ENCODE measurements at regions of chr11 and their contacts with region 1.

Region 1: GRCh38 chr11:355581-356458 is 13.5 kb upstream of the B4GALNT4 start:
- DNase-seq: peak; percentile 85
- ATAC-seq: peak; percentile 56
- H3K4me3 ChIP-seq: peak overlapping the region in 4 of 5 experiments; percentile 41 to 53 (median 43)
- H3K4me3 Mint-ChIP-seq: peak overlapping the region; percentile 88
- H3K27ac ChIP-seq: peak overlapping the region; percentile 81 to 85
- H3K27ac Mint-ChIP-seq: peak overlapping the region; percentile 90
- H3K4me1 ChIP-seq: peaks cover 13 to 20% of the 10 kb centered on the region in 2 donors
- H3K4me1 Mint-ChIP-seq: peaks cover 18% of the 10 kb centered on the region
- H3K27me3 ChIP-seq: no peaks in the 10 kb centered on the region
- H3K27me3 Mint-ChIP-seq: no peaks in the 10 kb centered on the region
- CTCF ChIP-seq: no peak

Region 2: GRCh38 chr11:207208-207862 is 148.5 kb before region 1 on chr11 and contains the starts of genes BET1L and RIC8A:
- CTCF ChIA-PET with region 1: interaction called, 5 read pairs
- POLR2A ChIA-PET with region 1: interaction called, 12 read pairs
- intact Hi-C with region 1: loop called (anchors 1 kb)
- DNase-seq: peak; percentile 99
- ATAC-seq: peak; percentile 79
- H3K4me3 ChIP-seq: peak within 1 kb of the TSS; percentile 87 to 98 (median 91)
- H3K4me3 Mint-ChIP-seq: peak within 1 kb of the TSS; percentile 98
- H3K27ac ChIP-seq: peak within 1 kb of the TSS; percentile 96 to 98
- H3K27ac Mint-ChIP-seq: peak within 1 kb of the TSS; percentile 100
- H3K4me1 ChIP-seq: peaks cover 26 to 43% of the 10 kb centered on the region in 2 donors
- H3K4me1 Mint-ChIP-seq: peaks cover 53% of the 10 kb centered on the region
- H3K27me3 ChIP-seq: no peaks in the 10 kb centered on the region
- H3K27me3 Mint-ChIP-seq: no peaks in the 10 kb centered on the region
- CTCF ChIP-seq: no peak
- total RNA-seq, gene BET1L: 69.1 and 72.2 TPM in 2 replicates
- total RNA-seq, gene RIC8A: 102 and 110 TPM in 2 replicates

Region 3: DNA sequence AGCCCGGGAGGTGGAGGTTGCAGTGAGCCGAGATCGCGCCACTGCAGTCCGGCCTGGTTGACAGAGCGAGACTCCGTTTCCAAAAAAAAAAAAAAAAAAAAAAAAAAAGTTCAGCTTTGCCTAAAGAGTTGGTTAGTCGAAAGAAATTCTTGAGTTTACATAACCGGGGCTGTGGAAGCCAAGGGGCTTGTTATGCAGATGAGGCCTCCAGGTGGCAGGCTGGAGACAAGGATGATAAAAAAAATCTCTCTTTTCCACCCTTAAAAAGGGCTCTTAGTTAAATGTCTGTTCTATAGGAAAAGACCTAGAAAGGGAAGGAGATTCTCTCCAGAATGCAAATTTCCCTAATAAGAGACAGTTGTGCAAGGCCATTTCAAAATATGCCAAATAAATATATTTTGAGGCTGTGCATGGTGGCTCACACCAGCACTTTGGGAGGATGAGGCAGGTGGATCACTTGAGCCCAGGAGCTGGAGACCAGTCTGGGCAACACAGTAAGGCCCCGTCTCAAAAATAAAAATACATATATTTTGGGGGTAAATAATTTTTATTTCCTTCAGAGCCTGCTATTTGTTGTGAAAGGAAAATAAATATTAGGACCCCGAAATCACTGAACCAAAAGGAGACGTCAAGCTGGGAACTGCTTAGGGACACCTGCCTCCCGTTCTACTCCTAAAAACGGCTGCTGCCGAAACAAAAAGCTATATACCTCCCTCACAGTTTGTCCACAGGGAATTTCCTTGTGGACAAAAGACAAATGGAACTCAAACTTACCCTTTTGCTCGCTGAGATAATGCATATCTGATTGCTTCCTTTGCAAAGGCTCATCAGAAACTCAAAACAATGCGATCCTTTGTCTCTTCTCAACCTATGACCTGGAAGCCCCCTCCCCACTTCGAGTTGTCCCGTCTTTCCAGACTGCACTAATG is 50.6 kb before region 1 on chr11:
- CTCF ChIA-PET with region 1: interaction called, 28 read pairs
- POLR2A ChIA-PET with region 1: interaction called, 5 read pairs
- intact Hi-C with region 1: loop called (anchors 2 kb)
- DNase-seq: peak; percentile 71
- ATAC-seq: peak; percentile 37
- H3K4me3 ChIP-seq: no peak overlapping the region
- H3K4me3 Mint-ChIP-seq: no peak overlapping the region
- H3K27ac ChIP-seq: no peak overlapping the region
- H3K27ac Mint-ChIP-seq: peak overlapping the region; percentile 73
- H3K4me1 ChIP-seq: peaks cover 28 to 56% of the 10 kb centered on the region in 2 donors
- H3K4me1 Mint-ChIP-seq: peaks cover 52% of the 10 kb centered on the region
- H3K27me3 ChIP-seq: peaks cover 0 to 2% (median 0%) of the 10 kb centered on the region in 4 experiments
- H3K27me3 Mint-ChIP-seq: no peaks in the 10 kb centered on the region
- CTCF ChIP-seq: peak; percentile 67

Region 4: DNA sequence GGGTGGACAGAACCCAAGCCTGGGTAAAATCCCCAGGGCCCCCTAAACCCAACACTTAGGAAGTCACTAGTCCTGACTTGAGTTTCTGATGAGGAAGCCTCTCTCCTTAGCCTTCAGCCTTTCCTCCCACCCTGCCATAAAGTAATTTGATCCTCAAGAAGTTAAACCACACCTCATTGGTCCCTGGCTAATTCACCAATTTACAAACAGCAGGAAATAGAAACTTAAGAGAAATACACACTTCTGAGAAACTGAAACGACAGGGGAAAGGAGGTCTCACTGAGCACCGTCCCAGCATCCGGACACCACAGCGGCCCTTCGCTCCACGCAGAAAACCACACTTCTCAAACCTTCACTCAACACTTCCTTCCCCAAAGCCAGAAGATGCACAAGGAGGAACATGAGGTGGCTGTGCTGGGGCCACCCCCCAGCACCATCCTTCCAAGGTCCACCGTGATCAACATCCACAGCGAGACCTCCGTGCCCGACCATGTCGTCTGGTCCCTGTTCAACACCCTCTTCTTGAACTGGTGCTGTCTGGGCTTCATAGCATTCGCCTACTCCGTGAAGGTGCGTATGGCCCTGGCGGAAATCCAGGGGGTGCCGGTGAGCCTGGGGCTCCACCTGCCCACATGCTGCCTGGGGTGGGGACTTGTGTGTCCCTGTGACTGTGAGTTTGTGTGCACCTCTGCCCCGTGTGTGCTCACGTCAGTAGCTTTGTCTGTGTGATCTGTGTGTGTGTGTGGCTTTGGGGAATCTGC is 41.9 kb before region 1 on chr11 and contains the start of gene IFITM1:
- CTCF ChIA-PET with region 1: interaction called, 11 read pairs
- POLR2A ChIA-PET with region 1: interaction called, 5 read pairs
- intact Hi-C with region 1: no loop called
- DNase-seq: peak; percentile 78
- ATAC-seq: peak; percentile 37
- H3K4me3 ChIP-seq: peak within 1 kb of the TSS; percentile 44 to 79 (median 60)
- H3K4me3 Mint-ChIP-seq: peak within 1 kb of the TSS; percentile 93
- H3K27ac ChIP-seq: peak within 1 kb of the TSS; percentile 84 to 89
- H3K27ac Mint-ChIP-seq: peak within 1 kb of the TSS; percentile 94
- H3K4me1 ChIP-seq: peaks cover 42 to 65% of the 10 kb centered on the region in 2 donors
- H3K4me1 Mint-ChIP-seq: peaks cover 55% of the 10 kb centered on the region
- H3K27me3 ChIP-seq: no peaks in the 10 kb centered on the region
- H3K27me3 Mint-ChIP-seq: no peaks in the 10 kb centered on the region
- CTCF ChIP-seq: no peak
- total RNA-seq, gene IFITM1: 19.5 and 19.7 TPM in 2 replicates

Region 5: GRCh38 chr11:326842-327580 is 28.8 kb before region 1 on chr11:
- CTCF ChIA-PET with region 1: interaction called, 10 read pairs
- POLR2A ChIA-PET with region 1: interaction called, 8 read pairs
- intact Hi-C with region 1: no loop called
- DNase-seq: peak; percentile 87
- ATAC-seq: peak; percentile 74
- H3K4me3 ChIP-seq: peak overlapping the region in 4 of 5 experiments; percentile 21 to 34 (median 26)
- H3K4me3 Mint-ChIP-seq: peak overlapping the region; percentile 66
- H3K27ac ChIP-seq: peak overlapping the region; percentile 95 to 96
- H3K27ac Mint-ChIP-seq: peak overlapping the region; percentile 95
- H3K4me1 ChIP-seq: peaks cover 34 to 55% of the 10 kb centered on the region in 2 donors
- H3K4me1 Mint-ChIP-seq: peaks cover 54% of the 10 kb centered on the region
- H3K27me3 ChIP-seq: no peaks in the 10 kb centered on the region
- H3K27me3 Mint-ChIP-seq: no peaks in the 10 kb centered on the region
- CTCF ChIP-seq: no peak

Region 6: GRCh38 chr11:842370-843002 is 486.7 kb after region 1 on chr11 and contains the starts of genes POLR2L and TSPAN4:
- CTCF ChIA-PET with region 1: no interaction called
- POLR2A ChIA-PET with region 1: no interaction called
- intact Hi-C with region 1: no loop called
- DNase-seq: peak; percentile 97
- ATAC-seq: peak; percentile 84
- H3K4me3 ChIP-seq: peak within 1 kb of the TSS; percentile 69 to 96 (median 76)
- H3K4me3 Mint-ChIP-seq: peak within 1 kb of the TSS; percentile 88
- H3K27ac ChIP-seq: peak within 1 kb of the TSS in 1 of 2 donors; percentile 93
- H3K27ac Mint-ChIP-seq: peak within 1 kb of the TSS; percentile 91
- H3K4me1 ChIP-seq: peaks cover 26 to 37% of the 10 kb centered on the region in 2 donors
- H3K4me1 Mint-ChIP-seq: peaks cover 27% of the 10 kb centered on the region
- H3K27me3 ChIP-seq: peaks cover 0 to 30% (median 6%) of the 10 kb centered on the region in 4 experiments
- H3K27me3 Mint-ChIP-seq: no peaks in the 10 kb centered on the region
- CTCF ChIP-seq: no peak
- total RNA-seq, gene POLR2L: 39.0 and 44.4 TPM in 2 replicates
- total RNA-seq, gene TSPAN4: 2.2 and 2.9 TPM in 2 replicates